ENCODE measurements at regions of chr3 and their contacts with region 1.

Region 1: DNA sequence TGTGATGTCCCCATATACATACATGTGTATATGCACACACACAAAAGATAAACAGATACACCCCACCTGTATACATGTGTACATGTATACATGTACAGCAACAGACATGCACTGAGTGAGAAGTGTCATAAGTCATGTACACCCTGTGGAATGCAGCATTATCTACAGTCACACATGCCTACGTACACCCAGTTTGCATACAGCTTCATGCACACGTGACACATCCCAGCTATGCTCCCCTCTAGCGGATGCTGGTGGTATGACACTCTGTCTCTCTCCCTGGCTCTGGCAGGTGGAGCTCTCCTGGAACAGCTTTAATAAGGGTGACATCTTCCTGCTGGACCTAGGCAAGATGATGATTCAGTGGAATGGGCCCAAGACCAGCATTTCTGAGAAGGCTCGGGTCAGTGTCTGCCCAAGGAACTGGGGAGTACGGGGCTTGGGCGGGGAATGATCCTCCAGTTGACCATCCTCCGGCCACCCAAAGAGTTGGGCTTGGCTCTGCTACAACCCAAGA is 6.3 kb downstream of the VILL start:
- DNase-seq: peak; percentile 88
- ATAC-seq: peak; percentile 26
- H3K4me3 Mint-ChIP-seq: no peak overlapping the region
- H3K27ac Mint-ChIP-seq: no peak overlapping the region
- H3K4me1 Mint-ChIP-seq: peaks cover 26% of the 10 kb centered on the region
- H3K27me3 Mint-ChIP-seq: peaks cover 29% of the 10 kb centered on the region
- CTCF ChIP-seq: peak; percentile 97

Region 2: DNA sequence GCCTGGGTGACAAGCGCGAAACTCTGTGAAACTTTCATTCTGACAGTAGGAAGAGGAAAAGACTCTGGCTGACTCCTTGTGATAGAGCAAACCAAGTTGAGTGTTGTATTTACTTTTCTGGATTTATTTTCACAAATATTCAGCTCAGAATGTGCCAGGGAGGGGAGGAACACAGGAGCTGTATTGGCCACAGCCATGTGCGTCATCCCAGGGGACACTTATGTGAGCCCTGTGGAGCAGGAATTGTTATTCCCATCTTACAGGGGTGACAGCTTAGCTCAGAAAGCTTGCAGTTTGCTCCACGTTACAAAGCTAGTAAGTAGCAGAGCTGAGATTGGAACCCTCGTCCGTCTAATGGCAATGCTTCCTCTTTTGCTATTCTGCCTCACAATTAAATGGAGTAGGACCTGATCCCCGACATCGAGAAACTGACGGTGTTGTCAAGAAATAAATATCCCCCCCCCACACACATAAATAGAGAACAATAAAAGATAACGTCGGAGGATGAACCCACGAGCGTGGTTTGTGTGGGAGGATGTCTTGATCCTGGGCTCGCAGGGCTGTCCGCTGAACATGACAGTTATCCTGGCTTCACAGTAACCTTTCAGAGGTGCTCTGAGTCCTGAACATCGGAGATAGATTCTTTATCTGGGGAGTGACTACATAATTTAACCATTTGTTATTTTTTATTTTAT is 286.8 kb before region 1 on chr3:
- CTCF ChIA-PET with region 1: no interaction called
- POLR2A ChIA-PET with region 1: no interaction called
- DNase-seq: no peak
- ATAC-seq: no peak
- H3K4me3 Mint-ChIP-seq: no peak overlapping the region
- H3K27ac Mint-ChIP-seq: no peak overlapping the region
- H3K4me1 Mint-ChIP-seq: peaks cover 12% of the 10 kb centered on the region
- H3K27me3 Mint-ChIP-seq: peaks cover 3% of the 10 kb centered on the region
- CTCF ChIP-seq: no peak

Region 3: DNA sequence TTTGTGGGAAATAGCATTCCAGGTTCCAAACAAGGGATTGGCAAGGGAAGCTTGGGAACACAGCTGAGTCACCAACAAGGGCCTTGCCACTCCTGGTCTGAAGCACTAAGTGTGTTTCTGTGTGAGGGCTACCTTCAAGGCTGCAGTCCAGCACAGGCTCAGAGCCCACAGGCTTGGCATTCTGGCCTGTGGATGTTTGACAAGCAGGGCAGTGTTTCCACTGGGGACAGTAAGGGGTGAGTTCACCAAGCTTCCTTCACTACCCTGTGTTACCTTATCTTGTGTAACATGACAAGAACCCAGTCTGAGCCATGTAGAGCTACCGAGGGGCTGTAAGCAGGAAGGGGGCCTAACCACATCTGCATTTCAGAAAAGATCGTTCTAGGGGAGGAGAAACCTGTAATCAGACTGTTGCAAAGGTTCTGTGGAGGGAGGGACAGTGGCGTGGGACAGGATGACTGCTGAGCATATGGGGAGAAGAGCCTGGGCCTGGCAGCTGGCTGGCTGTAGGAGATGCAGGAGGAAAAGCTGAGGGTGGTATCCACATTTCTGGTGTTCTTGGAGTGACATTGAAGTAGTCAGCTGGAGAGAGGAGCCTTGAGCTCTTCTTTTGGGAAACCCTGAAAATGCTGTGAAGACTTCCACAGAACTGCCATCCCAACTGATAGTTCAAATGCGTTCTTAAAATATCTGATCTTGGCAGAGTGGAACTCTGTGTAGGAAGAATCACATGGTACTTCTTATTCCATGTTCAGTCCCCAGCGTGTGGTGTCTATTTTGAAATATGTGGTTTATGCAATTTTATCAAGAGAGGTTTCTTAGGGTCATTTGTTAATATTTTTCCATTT is 73.9 kb before region 1 on chr3:
- CTCF ChIA-PET with region 1: no interaction called
- POLR2A ChIA-PET with region 1: no interaction called
- DNase-seq: no peak
- ATAC-seq: no peak
- H3K4me3 Mint-ChIP-seq: no peak overlapping the region
- H3K27ac Mint-ChIP-seq: no peak overlapping the region
- H3K4me1 Mint-ChIP-seq: peaks cover 25% of the 10 kb centered on the region
- H3K27me3 Mint-ChIP-seq: no peaks in the 10 kb centered on the region
- CTCF ChIP-seq: no peak

Region 4: DNA sequence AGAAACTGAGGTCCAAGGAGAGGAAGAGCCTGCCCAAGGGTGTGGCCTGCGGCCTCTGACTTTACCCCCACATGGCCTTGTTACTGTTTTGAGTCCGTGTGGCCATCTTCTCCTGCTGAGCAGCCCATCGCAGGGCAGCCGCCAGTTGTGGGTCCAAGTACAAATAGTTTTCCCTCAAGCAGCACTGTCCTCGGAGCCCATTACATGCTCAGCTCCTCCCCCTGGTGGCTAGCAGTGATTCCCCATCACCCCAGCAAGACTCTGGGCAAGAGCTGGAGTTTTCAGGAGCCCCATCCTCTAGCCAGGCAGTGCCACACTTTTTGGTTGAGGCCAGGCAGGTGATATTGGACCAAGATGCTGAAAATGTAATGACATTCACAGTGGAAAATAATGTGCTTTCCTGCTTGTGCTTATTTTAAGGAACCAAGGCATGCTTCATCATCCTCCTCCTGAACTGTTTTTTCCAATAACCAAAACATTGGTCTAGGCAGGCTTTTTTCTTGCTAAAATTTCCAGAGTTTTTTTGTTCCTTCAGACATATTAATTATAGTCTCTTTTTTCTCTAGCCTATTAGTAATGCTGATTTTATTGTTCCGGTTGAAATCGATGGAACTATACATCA is 29.5 kb before region 1 on chr3:
- CTCF ChIA-PET with region 1: interaction called, 19 read pairs
- POLR2A ChIA-PET with region 1: no interaction called
- DNase-seq: peak; percentile 85
- ATAC-seq: peak; percentile 96
- H3K4me3 Mint-ChIP-seq: no peak overlapping the region
- H3K27ac Mint-ChIP-seq: no peak overlapping the region
- H3K4me1 Mint-ChIP-seq: peaks cover 31% of the 10 kb centered on the region
- H3K27me3 Mint-ChIP-seq: no peaks in the 10 kb centered on the region
- CTCF ChIP-seq: peak; percentile 77

Region 5: DNA sequence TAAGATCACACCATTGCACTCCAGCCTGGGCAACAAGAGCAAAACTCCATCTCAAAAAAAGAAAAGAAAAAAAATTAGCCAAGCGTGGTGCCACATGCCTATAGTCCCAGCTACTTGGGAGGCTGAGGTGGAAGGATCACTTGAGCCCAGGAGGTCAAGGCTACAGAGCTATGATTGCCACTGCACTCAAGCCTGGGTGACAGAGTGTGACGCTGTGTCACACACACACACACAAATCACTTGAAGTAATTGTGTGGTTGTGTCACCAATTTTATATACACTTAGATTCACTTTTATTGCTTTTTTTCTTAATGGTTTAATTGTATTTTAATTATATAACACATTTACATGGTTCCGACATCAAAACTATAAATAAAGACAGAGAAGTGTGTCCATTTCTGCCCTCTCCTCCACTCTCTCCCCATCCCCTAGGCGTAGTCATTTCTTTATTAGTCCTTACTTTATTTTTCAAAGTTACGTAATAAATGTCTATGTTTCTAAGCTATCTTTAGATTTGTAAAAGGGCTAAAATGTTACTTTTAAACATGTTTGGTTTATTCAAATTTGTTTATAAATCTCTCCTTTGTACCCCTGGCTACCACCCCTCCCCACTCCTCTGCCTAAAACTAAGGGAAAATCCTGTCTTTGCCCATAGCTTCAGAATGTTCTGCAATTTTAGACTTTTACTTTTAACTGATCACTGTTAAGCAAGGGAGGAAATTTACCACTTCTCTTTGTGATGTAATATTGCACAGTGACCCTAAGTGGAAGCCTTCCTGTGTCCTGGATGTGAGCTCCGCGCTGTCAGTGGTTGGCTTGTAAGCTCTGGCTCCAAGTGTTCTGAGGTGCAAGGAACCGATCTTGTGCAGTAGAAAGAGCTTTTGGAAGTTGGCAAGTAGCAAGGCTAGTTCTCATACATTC is 17.0 kb before region 1 on chr3:
- CTCF ChIA-PET with region 1: interaction called, 37 read pairs
- POLR2A ChIA-PET with region 1: no interaction called
- DNase-seq: no peak
- ATAC-seq: no peak
- H3K4me3 Mint-ChIP-seq: no peak overlapping the region
- H3K27ac Mint-ChIP-seq: no peak overlapping the region
- H3K4me1 Mint-ChIP-seq: peaks cover 8% of the 10 kb centered on the region
- H3K27me3 Mint-ChIP-seq: no peaks in the 10 kb centered on the region
- CTCF ChIP-seq: no peak

Region 6: DNA sequence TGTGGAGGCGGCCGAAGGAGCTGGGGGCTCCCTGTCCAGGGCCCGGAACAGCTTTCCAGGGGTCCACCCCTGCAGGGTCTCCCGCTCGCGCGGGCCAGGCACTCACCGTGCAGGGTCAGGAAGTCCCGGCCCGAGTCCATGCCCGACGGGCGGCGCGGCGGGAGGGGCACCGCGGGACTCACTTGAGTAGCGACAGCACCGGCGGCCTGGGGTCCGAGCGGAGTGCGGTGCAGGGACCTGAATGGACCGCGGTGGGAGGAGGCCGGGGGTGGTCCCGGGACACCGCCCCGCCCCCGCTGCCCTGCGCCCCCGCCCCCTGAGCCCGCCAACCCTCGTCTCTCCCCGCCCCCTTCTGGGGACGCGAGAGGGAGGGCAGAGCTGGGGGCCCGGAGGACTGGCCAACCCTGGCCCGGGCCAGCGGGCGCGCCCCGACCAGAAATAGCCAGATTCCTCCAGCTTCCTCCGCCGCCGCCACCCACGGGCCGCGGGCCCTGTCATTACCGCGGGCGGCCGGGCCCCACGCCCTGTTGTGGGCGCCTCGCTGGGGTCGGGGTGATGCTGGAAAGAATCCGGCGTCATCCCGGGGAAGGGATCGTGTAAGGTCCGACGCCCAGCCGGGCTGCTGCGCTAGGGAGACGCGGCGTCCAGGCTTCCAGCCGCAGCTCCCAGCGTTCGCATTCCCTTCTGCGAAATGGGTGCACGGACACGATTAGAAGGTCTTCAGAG is 32.7 kb after region 1 on chr3 and contains the start of gene PLCD1:
- CTCF ChIA-PET with region 1: interaction called, 32 read pairs
- POLR2A ChIA-PET with region 1: no interaction called
- DNase-seq: peak; percentile 82
- ATAC-seq: peak; percentile 23
- H3K4me3 Mint-ChIP-seq: peak within 1 kb of the TSS; percentile 75
- H3K27ac Mint-ChIP-seq: no peak within 1 kb of the TSS
- H3K4me1 Mint-ChIP-seq: peaks cover 12% of the 10 kb centered on the region
- H3K27me3 Mint-ChIP-seq: peaks cover 73% of the 10 kb centered on the region
- CTCF ChIP-seq: no peak
- total RNA-seq, gene PLCD1: 29.9 to 33.3 TPM (median 32.6 TPM) in 3 replicates

Region 7: DNA sequence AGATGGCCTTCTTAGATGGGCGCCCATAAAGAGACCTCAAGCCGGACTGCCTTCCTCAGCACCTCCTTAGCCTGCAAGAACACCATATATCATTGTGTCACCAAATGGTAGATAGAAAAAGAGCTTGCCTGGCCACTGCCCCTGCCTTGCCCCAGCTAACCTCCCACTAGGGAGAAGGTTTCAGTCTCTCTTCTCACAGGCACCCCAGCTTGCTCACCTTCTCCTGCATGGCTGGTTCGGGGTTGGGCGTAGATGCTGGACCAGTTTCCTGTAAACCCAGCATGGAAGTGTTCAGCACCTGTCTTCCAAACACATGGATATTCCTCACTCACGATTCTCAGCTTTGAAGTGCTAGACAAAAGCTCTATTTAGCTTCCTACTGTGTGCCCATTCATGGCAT is 282.0 kb after region 1 on chr3:
- CTCF ChIA-PET with region 1: no interaction called
- POLR2A ChIA-PET with region 1: interaction called, 10 read pairs
- DNase-seq: no peak
- ATAC-seq: no peak
- H3K4me3 Mint-ChIP-seq: no peak overlapping the region
- H3K27ac Mint-ChIP-seq: no peak overlapping the region
- H3K4me1 Mint-ChIP-seq: peaks cover 7% of the 10 kb centered on the region; the same call in 1 of the 2 replicates
- H3K27me3 Mint-ChIP-seq: no peaks in the 10 kb centered on the region
- CTCF ChIP-seq: no peak